ENCODE measurements at regions of chr1 and their contacts with region 1.

Region 1: GRCh38 chr1:211514030-211514754 is 22.2 kb upstream of the RD3 start:
- DNase-seq: peak; percentile 77 to 93
- H3K4me3 ChIP-seq: no peak overlapping the region
- H3K4me1 ChIP-seq: peaks cover 10% of the 10 kb centered on the region
- H3K27me3 ChIP-seq: no peaks in the 10 kb centered on the region

Region 2: GRCh38 chr1:211323156-211324063 is 190.8 kb before region 1 on chr1:
- in situ Hi-C with region 1: loop called (anchors 5 kb)
- DNase-seq: peak; percentile 71 to 76
- H3K4me3 ChIP-seq: no peak overlapping the region
- H3K4me1 ChIP-seq: peaks cover 13% of the 10 kb centered on the region
- H3K27me3 ChIP-seq: no peaks in the 10 kb centered on the region

Region 3: DNA sequence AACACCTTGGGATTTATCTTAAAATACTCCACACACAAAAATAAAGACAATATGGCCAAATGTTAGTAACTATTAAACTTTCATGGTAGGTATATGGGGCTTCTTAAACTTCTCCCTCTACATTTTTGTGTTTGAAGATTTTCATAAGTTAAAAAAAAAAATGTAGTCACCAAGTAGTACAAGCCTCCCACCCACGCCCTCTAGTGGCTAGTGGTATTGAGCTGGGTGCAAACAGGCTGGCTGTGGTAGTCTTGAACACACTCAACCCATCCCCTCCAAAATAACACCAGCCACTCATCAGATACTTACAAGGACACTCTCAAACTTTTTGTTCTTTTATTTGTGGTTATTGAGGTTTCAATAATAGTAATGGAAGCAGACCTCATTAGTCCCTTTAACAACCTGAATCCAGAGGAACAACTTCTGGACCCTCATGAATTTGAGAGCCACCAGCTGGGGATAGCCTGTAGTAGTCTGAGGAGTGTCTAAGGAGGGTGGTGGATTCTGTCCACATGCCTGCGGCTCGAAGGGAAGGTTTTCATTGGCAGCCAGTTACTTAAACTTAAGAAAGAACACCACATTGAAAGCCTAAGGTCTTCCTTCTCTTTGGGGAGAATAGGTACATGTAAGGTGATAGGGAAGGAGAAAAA is 37.9 kb before region 1 on chr1:
- in situ Hi-C with region 1: loop called (anchors 5 kb)
- DNase-seq: peak; percentile 44 to 86
- H3K4me3 ChIP-seq: no peak overlapping the region
- H3K4me1 ChIP-seq: peaks cover 4% of the 10 kb centered on the region; the same call in 1 of the 2 replicates
- H3K27me3 ChIP-seq: peaks cover 4% of the 10 kb centered on the region; the same call in 1 of the 2 replicates

Region 4: DNA sequence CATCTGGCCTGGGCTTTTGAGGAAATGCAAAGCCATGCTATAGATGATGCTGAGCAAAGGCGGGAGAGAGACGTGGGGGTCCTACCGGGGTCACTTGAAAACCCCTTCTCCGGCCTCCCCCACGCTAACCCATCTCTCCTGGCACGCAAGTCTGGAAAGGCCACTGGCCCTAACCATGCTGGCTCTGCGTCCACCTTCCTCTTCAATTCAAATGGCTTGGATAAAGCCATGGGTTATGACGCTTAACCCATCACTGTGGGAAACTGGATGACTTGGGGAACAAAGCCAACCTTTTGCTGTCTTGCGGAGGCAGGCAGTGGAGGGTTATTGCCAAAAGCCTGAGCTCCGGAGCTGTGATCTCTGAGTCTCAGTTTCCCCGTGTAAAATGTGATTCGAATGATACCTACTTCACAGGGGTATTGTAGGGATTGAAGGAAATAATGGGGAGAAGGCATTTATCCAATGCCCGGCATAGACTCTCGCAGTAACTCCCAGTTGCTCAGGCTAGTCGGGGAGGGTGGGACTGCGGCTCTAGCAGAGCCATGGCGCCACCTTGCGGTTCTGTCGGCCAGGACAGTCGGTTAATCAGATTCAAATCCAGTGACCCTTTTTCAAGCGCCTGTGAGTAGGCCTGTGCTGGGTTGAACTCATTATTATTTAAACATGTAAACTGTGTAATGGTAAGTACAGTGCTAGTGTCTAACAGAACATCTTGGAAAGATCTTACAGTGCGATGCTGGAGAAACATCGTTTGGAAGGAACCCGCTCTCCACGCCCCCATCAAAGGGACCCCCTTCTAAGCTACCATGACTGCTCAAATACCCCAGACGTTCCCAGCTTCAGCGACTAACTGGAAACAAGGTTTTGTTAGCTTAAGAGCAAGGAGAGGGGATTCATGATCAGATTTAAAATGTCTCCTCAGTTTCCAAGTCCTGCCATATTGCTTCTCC is 140.9 kb after region 1 on chr1:
- in situ Hi-C with region 1: loop called (anchors 5 kb)
- DNase-seq: peak; percentile 80 to 93
- H3K4me3 ChIP-seq: no peak overlapping the region
- H3K4me1 ChIP-seq: no peaks in the 10 kb centered on the region
- H3K27me3 ChIP-seq: no peaks in the 10 kb centered on the region

Measured in HAP-1 (cell line).